ENCODE measurements at regions of chr2 and their contacts with region 1.

Region 1: GRCh38 chr2:112941753-112942658 is 31.0 kb downstream of the IL37 start:
- DNase-seq: peak; percentile 79 to 84
- H3K4me3 ChIP-seq: no peak overlapping the region
- H3K4me3 Mint-ChIP-seq: no peak overlapping the region
- H3K27ac Mint-ChIP-seq: no peak overlapping the region
- H3K4me1 ChIP-seq: peaks cover 9% of the 10 kb centered on the region; the same call in 1 of the 2 replicates
- H3K4me1 Mint-ChIP-seq: peaks cover 5% of the 10 kb centered on the region
- H3K27me3 ChIP-seq: no peaks in the 10 kb centered on the region
- H3K27me3 Mint-ChIP-seq: no peaks in the 10 kb centered on the region
- CTCF ChIP-seq: peak; percentile 80 to 84

Region 2: GRCh38 chr2:112749755-112750559 is 192.0 kb before region 1 on chr2:
- CTCF ChIA-PET with region 1: interaction called, 41 read pairs
- POLR2A ChIA-PET with region 1: no interaction called
- intact Hi-C with region 1: loop called (anchors 1 kb)
- DNase-seq: peak; percentile 74 to 86
- H3K4me3 ChIP-seq: no peak overlapping the region
- H3K4me3 Mint-ChIP-seq: no peak overlapping the region
- H3K27ac Mint-ChIP-seq: peak overlapping the region; percentile 67
- H3K4me1 ChIP-seq: peaks cover 9% of the 10 kb centered on the region
- H3K4me1 Mint-ChIP-seq: peaks cover 7% of the 10 kb centered on the region
- H3K27me3 ChIP-seq: no peaks in the 10 kb centered on the region
- H3K27me3 Mint-ChIP-seq: no peaks in the 10 kb centered on the region
- CTCF ChIP-seq: peak; percentile 81 to 94

Region 3: DNA sequence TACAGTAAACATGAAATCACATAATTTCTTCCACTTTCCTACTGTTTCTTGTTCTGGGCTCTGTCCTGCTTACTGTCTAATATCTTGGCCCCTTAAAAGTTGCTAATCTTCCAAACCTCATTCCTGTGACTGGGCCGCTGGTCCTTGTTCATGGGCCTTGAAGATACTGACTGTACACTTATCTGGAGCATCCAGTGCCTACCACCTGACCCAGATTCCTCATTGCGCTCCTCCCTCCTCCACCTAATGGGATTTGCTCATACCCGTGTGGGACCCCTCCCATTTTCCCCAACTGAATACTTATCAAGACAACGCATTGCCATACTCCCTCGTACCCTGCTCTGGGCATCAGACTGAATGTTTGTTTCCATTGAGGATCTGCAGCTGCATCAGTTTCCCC is 37.1 kb before region 1 on chr2:
- CTCF ChIA-PET with region 1: interaction called, 20 read pairs
- POLR2A ChIA-PET with region 1: no interaction called
- intact Hi-C with region 1: loop called (anchors 5 kb)
- DNase-seq: no peak
- H3K4me3 ChIP-seq: no peak overlapping the region
- H3K4me3 Mint-ChIP-seq: no peak overlapping the region
- H3K27ac Mint-ChIP-seq: no peak overlapping the region
- H3K4me1 ChIP-seq: peaks cover 28% of the 10 kb centered on the region
- H3K4me1 Mint-ChIP-seq: peaks cover 33% of the 10 kb centered on the region
- H3K27me3 ChIP-seq: no peaks in the 10 kb centered on the region
- H3K27me3 Mint-ChIP-seq: no peaks in the 10 kb centered on the region
- CTCF ChIP-seq: no peak

Region 4: DNA sequence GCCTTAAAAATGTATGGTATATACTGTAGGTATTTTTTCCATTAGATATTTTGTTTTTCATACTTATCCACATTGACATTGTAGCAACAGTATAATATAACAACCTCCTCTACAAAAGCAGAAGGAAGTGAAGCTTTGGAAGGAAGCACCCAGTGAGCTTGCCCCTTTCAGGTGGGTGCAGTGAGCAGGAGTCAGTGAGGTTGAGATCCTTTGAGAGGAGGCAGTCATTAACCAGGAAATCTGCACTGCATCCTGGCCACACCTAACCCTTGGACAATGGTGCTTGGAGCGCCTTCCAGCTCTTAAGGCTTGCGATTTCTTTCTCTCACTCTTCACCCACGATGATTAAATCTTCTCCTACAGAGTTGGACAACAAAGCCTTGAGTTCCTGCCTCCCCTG is 17.2 kb before region 1 on chr2:
- CTCF ChIA-PET with region 1: interaction called, 14 read pairs
- POLR2A ChIA-PET with region 1: no interaction called
- intact Hi-C with region 1: no loop called
- DNase-seq: peak; percentile 36 to 59
- H3K4me3 ChIP-seq: no peak overlapping the region
- H3K4me3 Mint-ChIP-seq: no peak overlapping the region
- H3K27ac Mint-ChIP-seq: no peak overlapping the region
- H3K4me1 ChIP-seq: peaks cover 29% of the 10 kb centered on the region
- H3K4me1 Mint-ChIP-seq: peaks cover 13% of the 10 kb centered on the region
- H3K27me3 ChIP-seq: no peaks in the 10 kb centered on the region
- H3K27me3 Mint-ChIP-seq: no peaks in the 10 kb centered on the region
- CTCF ChIP-seq: no peak